ENCODE measurements at regions of chr19 and their contacts with region 1.

Region 1: GRCh38 chr19:18636183-18636968 is 452 bp upstream of the KLHL26 start:
- DNase-seq: peak; percentile 99
- ATAC-seq: peak; percentile 86
- H3K4me3 Mint-ChIP-seq: peak overlapping the region; percentile 88
- H3K27ac Mint-ChIP-seq: peak overlapping the region; percentile 84
- H3K4me1 Mint-ChIP-seq: peaks cover 23% of the 10 kb centered on the region
- H3K27me3 Mint-ChIP-seq: no peaks in the 10 kb centered on the region
- CTCF ChIP-seq: no peak

Region 2: GRCh38 chr19:18571564-18572300 is 64.6 kb before region 1 on chr19 and contains the start of gene UBA52:
- CTCF ChIA-PET with region 1: no interaction called
- POLR2A ChIA-PET with region 1: no interaction called
- intact Hi-C with region 1: loop called (anchors 1 kb)
- DNase-seq: peak; percentile 100
- ATAC-seq: peak; percentile 93
- H3K4me3 Mint-ChIP-seq: peak within 1 kb of the TSS; percentile 94
- H3K27ac Mint-ChIP-seq: peak within 1 kb of the TSS; percentile 93
- H3K4me1 Mint-ChIP-seq: peaks cover 30% of the 10 kb centered on the region
- H3K27me3 Mint-ChIP-seq: no peaks in the 10 kb centered on the region
- CTCF ChIP-seq: no peak
- total RNA-seq, gene UBA52: 1,962 and 2,164 TPM in 2 replicates

Region 3: GRCh38 chr19:18594096-18594823 is 42.1 kb before region 1 on chr19:
- CTCF ChIA-PET with region 1: no interaction called
- POLR2A ChIA-PET with region 1: interaction called, 10 read pairs
- intact Hi-C with region 1: loop called (anchors 1 kb)
- DNase-seq: peak; percentile 75
- ATAC-seq: peak; percentile 83
- H3K4me3 Mint-ChIP-seq: peak overlapping the region; percentile 76
- H3K27ac Mint-ChIP-seq: no peak overlapping the region
- H3K4me1 Mint-ChIP-seq: peaks cover 29% of the 10 kb centered on the region
- H3K27me3 Mint-ChIP-seq: peaks cover 5% of the 10 kb centered on the region
- CTCF ChIP-seq: no peak

Region 4: DNA sequence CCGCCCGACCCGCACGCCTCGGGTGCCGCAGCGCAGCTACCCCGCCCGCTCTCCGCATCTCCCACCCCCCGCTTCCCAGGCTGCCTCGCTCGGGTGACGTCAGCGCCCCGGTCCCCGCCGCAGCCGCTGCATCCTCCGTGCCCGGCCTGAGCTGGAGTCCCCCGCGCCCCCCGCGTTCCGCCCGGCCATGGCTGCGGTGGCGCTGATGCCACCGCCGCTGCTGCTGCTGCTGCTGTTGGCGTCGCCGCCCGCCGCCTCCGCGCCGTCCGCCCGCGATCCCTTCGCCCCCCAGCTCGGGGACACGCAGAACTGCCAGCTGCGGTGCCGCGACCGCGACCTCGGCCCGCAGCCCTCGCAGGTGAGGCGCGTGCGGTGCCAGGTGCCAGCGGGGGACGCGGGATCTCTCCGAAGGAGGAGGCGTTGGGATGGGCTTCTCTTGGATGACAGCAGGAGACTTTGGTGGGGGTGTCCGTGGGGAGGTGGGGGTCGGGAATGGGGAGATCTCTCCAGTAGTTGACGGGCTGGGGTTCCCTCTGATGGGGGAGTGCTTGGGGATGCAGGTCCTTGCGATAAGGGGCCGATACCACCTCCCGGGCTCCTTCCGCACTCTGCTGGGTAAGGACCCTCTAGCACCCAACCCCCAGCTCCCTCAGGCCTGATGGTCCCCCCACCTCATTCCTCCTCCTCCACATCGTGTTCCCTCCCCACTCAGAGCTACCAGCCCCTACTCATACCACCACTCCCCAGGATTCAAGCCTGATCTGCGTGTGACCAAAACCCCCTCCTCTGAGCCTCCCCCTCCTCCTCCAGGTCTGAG is 23.4 kb before region 1 on chr19 and contains the start of gene TMEM59L:
- CTCF ChIA-PET with region 1: no interaction called
- POLR2A ChIA-PET with region 1: no interaction called
- intact Hi-C with region 1: no loop called
- DNase-seq: peak; percentile 45
- ATAC-seq: peak; percentile 54
- H3K4me3 Mint-ChIP-seq: peak within 1 kb of the TSS; percentile 78
- H3K27ac Mint-ChIP-seq: no peak within 1 kb of the TSS
- H3K4me1 Mint-ChIP-seq: peaks cover 23% of the 10 kb centered on the region
- H3K27me3 Mint-ChIP-seq: peaks cover 63% of the 10 kb centered on the region
- CTCF ChIP-seq: no peak
- total RNA-seq, gene TMEM59L: 0.64 TPM in 1 of 2 replicates, not detected in the other

Region 5: DNA sequence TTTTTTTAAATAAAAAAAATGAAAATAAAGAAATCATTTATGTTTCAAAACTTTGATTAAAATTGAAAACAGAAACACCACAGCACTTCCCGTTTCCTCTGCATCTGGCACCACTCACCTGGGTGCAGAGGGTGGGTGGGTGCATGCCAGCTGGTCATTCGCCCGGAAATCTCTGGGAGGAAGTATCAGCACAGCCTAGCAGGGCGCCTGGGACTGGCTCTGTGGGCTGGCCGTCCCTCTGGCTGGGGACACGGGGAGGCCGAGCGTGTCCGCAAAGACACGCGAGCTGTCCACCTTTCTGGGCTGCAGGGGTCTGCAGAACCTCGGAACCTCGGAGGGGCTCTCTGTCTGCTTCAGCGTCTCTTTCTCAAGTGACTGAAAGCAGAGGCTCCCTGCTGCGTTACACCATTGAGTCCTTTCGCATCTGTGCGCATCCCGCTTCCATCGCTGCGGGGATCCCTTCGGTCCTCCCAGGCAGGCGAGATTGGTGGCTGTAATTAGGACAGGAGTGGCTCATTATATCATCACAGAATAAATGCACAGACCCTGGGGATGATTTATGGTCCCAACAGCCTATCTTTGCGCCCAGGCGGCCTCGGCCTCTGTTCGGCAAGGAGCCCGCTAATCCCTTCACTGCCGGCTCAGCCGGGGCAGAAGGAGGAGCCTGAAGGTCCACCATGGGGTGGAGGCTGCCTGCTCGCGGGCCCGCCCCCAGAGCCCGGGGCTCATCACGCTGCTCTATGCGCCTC is 64.3 kb after region 1 on chr19:
- CTCF ChIA-PET with region 1: no interaction called
- POLR2A ChIA-PET with region 1: no interaction called
- intact Hi-C with region 1: loop called (anchors 2 kb)
- DNase-seq: peak; percentile 63
- ATAC-seq: peak; percentile 87
- H3K4me3 Mint-ChIP-seq: peak overlapping the region; percentile 85
- H3K27ac Mint-ChIP-seq: peak overlapping the region; percentile 95
- H3K4me1 Mint-ChIP-seq: peaks cover 46% of the 10 kb centered on the region
- H3K27me3 Mint-ChIP-seq: no peaks in the 10 kb centered on the region
- CTCF ChIP-seq: no peak

Region 6: DNA sequence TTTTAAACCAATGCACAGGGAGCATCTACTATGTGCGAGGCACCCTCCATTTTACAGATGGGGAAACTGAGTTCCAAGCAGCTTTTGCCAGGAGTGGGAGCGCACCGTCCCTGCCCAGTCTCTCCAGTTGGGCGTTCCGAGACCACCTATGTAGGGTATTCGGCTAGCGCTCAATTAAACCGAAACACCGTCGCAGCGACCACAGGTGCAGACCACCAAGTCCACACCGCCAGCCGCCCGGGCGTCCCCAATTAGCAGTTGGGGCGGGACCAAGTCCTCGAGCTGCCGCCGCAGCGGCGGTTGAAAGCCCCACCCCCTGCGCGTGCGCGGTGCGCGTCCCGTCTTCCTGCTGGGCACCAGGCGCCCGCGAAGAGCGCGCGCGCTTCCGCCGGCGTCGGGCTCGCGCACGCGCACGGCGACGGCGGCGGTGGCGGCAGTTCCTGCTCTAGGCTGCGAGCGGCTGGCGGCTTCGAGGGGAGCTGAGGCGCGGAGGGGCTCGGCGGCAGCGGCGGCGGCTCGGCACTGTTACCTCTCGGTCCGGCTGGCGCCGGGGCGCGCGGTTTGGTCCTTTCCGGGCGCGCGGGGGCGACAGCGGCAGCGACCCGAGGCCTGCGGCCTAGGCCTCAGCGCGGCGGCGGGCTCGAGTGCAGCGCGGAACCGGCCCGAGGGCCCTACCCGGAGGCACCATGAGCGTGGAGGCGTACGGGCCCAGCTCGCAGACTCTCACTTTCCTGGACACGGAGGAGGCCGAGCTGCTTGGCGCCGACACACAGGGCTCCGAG is 195.3 kb after region 1 on chr19 and contains the start of gene UPF1:
- CTCF ChIA-PET with region 1: interaction called, 4 read pairs
- POLR2A ChIA-PET with region 1: interaction called, 4 read pairs
- intact Hi-C with region 1: loop called (anchors 1 kb)
- DNase-seq: peak; percentile 97
- ATAC-seq: peak; percentile 84
- H3K4me3 Mint-ChIP-seq: peak within 1 kb of the TSS; percentile 90
- H3K27ac Mint-ChIP-seq: peak within 1 kb of the TSS; percentile 77
- H3K4me1 Mint-ChIP-seq: peaks cover 35% of the 10 kb centered on the region
- H3K27me3 Mint-ChIP-seq: no peaks in the 10 kb centered on the region
- CTCF ChIP-seq: no peak
- total RNA-seq, gene UPF1: 93.2 and 107 TPM in 2 replicates

Region 7: GRCh38 chr19:19063183-19064097 is 427.1 kb after region 1 on chr19 and contains the start of gene SLC25A42:
- CTCF ChIA-PET with region 1: no interaction called
- POLR2A ChIA-PET with region 1: no interaction called
- intact Hi-C with region 1: loop called (anchors 1 kb)
- DNase-seq: peak; percentile 96
- ATAC-seq: peak; percentile 89
- H3K4me3 Mint-ChIP-seq: peak within 1 kb of the TSS; percentile 88
- H3K27ac Mint-ChIP-seq: peak within 1 kb of the TSS; percentile 89
- H3K4me1 Mint-ChIP-seq: peaks cover 52% of the 10 kb centered on the region
- H3K27me3 Mint-ChIP-seq: no peaks in the 10 kb centered on the region
- CTCF ChIP-seq: no peak
- total RNA-seq, gene SLC25A42: 14.2 and 17.5 TPM in 2 replicates